ENCODE measurements at regions of chr5 and their contacts with region 1.

Region 1: DNA sequence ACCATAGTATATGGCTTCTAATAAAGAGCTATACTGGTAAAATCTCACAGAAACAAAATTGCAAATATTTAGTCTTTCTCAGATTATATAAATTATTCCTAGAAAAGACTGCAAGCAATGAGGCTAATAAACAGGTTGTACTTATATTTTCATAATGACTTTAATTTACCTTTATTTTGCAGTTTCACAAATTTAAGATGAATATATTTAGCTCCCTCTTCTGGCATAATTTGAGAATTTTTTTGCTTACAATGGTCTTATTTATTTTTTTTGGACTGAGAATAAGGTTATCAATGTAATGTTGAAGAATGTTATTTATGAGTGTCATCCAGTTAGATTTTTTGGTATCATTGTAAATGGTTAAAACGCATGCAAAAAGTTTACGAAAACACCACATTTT is 56.7 kb downstream of the PIK3R1 start:
- DNase-seq: no peak
- H3K4me3 Mint-ChIP-seq: no peak overlapping the region
- H3K27ac Mint-ChIP-seq: no peak overlapping the region
- H3K4me1 Mint-ChIP-seq: peaks cover 73% of the 10 kb centered on the region
- H3K27me3 Mint-ChIP-seq: no peaks in the 10 kb centered on the region
- CTCF ChIP-seq: peak; percentile 35

Region 2: GRCh38 chr5:67165526-67166459 is 1106.5 kb before region 1 on chr5:
- CTCF ChIA-PET with region 1: no interaction called
- POLR2A ChIA-PET with region 1: interaction called, 4 read pairs
- intact Hi-C with region 1: loop called (anchors 2 kb)
- DNase-seq: peak; percentile 87
- H3K4me3 Mint-ChIP-seq: no peak overlapping the region
- H3K27ac Mint-ChIP-seq: peak overlapping the region; percentile 75
- H3K4me1 Mint-ChIP-seq: peaks cover 9% of the 10 kb centered on the region
- H3K27me3 Mint-ChIP-seq: no peaks in the 10 kb centered on the region
- CTCF ChIP-seq: peak; percentile 66

Region 3: DNA sequence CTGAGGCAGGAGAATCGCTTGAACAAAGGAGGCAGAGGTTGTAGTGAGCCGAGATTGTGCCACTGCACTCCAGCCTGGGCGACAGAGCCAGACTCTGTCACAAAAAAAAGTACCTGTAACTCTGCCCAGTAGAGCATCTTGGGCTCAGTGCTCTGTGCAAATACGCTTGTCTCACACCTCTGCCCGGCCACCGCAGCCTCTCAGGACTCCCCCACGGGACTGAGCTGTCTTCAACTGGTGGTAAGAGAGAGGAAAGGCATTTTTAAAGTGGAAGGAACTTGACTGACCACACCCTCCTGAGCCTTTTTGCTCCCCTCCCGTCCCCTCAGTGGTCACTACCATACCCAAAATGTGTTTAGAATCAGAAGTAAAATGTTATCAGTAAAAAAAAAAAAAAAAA is 231.0 kb before region 1 on chr5:
- CTCF ChIA-PET with region 1: no interaction called
- POLR2A ChIA-PET with region 1: no interaction called
- intact Hi-C with region 1: no loop called
- DNase-seq: no peak
- H3K4me3 Mint-ChIP-seq: no peak overlapping the region
- H3K27ac Mint-ChIP-seq: no peak overlapping the region
- H3K4me1 Mint-ChIP-seq: peaks cover 12% of the 10 kb centered on the region
- H3K27me3 Mint-ChIP-seq: no peaks in the 10 kb centered on the region
- CTCF ChIP-seq: no peak

Region 4: GRCh38 chr5:68055686-68056085 is 216.6 kb before region 1 on chr5:
- CTCF ChIA-PET with region 1: no interaction called
- POLR2A ChIA-PET with region 1: no interaction called
- intact Hi-C with region 1: no loop called
- DNase-seq: no peak
- H3K4me3 Mint-ChIP-seq: no peak overlapping the region
- H3K27ac Mint-ChIP-seq: no peak overlapping the region
- H3K4me1 Mint-ChIP-seq: no peaks in the 10 kb centered on the region
- H3K27me3 Mint-ChIP-seq: no peaks in the 10 kb centered on the region
- CTCF ChIP-seq: no peak

Region 5: DNA sequence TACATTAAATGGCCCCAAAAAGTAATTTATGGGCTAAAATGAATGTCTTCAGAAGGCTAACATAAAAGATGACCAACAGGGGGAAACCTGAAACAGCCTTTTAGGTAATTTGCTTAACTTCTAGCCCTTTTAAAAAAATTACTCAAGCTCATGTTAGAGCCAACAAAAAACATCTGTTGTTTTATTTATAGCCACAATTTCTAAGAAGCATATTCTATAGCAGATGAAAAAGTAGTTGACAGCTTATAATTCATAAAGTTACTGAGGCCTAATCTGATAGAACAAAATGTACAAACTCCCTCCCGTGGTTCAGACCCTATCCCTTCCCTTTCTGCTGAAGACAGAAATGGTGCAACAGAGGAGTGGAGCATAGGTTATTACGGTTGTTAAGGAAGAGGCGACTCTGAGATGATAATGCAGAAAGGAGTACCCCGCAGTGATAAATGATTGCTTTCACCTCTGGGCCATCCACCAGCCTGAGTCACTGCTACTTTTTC is 10.7 kb before region 1 on chr5:
- CTCF ChIA-PET with region 1: interaction called, 10 read pairs
- POLR2A ChIA-PET with region 1: interaction called, 7 read pairs
- intact Hi-C with region 1: no loop called
- DNase-seq: no peak
- H3K4me3 Mint-ChIP-seq: no peak overlapping the region
- H3K27ac Mint-ChIP-seq: no peak overlapping the region
- H3K4me1 Mint-ChIP-seq: peaks cover 68% of the 10 kb centered on the region
- H3K27me3 Mint-ChIP-seq: no peaks in the 10 kb centered on the region
- CTCF ChIP-seq: peak; percentile 17

Measured in MCF 10A (cell line).